Head of caudate nucleus (tissue), 42 donors: ENCODE measurements at regions of chr2 and their contacts with region 1.

Region 1: GRCh38 chr2:207046724-207047123 is 107.4 kb downstream of the CPO start:
- DNase-seq: peak in 15 of 42 donors; percentile 15 to 70 (median 36)

Region 2: DNA sequence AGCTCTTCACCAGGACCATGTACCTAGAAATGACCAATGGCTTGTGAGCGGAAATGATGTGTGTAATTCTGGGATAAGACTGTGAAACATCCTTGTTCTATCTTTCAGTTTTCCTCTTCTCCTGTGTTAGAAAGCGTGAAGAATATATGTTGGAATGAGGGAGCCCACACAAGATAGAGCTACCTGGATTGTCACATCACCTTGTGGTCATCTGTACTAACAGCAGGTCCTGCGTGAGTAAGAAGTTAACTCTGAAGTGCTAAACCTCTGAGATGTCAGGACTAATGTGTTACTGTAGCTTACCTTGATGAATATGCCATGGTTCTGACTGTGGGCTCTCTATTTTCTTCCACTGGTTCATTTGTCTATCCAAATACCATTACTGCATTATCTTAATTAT is 205.7 kb before region 1 on chr2:
- intact Hi-C with region 1: no loop called
- DNase-seq: no peak

Region 3: GRCh38 chr2:206890926-206891325 is 155.8 kb before region 1 on chr2:
- intact Hi-C with region 1: no loop called
- DNase-seq: no peak

Region 4: DNA sequence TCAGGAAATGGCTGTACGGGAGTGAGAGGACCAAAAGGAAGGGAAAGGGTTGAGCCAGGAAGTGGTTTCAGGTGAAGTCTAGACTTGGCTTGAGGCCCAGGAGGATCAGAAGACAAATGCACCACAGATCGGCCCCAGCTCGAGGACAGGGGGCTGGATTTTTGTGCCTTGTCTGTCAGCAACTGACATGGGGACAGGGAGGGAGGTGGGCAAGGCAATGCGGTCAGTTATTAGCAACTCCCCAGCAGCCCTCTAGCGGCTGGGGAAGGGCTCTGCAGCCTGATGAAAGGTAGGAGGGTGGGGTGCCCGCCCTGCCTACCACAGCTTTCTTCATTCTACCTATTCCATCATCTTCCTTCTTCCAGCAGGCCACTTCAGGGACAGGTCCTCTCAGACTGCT is 57.4 kb before region 1 on chr2:
- intact Hi-C with region 1: loop called (anchors 5 kb)
- DNase-seq: peak in 27 of 42 donors; percentile 9 to 62 (median 22)